Psoas muscle (tissue), 8 donors: ENCODE measurements at regions of chr7 and their contacts with region 1.

Region 1: DNA sequence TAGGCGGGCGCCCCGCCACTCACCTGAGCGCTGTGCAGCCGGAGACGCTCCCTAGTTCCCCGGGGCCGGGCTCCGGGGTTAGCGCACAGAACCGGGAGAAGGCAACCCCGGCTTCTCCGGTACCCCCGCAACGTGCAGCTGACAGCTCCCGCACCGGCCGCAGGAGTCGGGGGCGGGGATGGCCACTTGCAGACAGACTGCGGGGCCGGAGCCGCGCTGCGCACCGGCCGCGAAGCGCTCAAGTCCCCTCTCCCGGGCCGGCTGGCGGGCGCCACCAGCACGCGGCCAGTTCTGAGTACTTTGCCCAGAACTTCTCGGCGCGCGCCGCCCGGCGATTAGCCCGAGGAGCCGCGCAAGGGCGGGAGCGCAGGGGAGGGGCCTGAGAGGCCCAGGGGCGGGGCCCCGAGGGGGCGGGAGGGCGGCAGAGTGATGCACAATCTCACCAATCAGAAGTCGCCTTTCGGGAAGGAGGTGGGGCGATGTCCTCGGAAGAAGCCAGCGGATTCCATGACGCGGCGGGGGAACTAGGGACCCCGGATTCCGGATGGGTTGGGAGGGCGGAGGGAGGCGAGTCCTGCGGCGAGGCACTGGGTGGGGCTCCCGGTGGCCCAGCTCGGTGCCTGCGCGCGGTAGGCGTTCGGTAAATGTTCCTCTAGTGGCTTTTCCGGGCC is at the start of gene OSBPL3:
- DNase-seq: peak; percentile 91 to 95
- ATAC-seq: peak; percentile 97 to 99 (median 97)
- H3K4me3 ChIP-seq: peak within 1 kb of the TSS; percentile 76
- H3K27ac ChIP-seq: peak within 1 kb of the TSS; percentile 83
- H3K4me1 ChIP-seq: no peaks in the 10 kb centered on the region
- H3K27me3 ChIP-seq: no peaks in the 10 kb centered on the region
- CTCF ChIP-seq: no peak
- total RNA-seq, gene OSBPL3: 1.9 to 8.7 (median 3.8) TPM

Region 2: DNA sequence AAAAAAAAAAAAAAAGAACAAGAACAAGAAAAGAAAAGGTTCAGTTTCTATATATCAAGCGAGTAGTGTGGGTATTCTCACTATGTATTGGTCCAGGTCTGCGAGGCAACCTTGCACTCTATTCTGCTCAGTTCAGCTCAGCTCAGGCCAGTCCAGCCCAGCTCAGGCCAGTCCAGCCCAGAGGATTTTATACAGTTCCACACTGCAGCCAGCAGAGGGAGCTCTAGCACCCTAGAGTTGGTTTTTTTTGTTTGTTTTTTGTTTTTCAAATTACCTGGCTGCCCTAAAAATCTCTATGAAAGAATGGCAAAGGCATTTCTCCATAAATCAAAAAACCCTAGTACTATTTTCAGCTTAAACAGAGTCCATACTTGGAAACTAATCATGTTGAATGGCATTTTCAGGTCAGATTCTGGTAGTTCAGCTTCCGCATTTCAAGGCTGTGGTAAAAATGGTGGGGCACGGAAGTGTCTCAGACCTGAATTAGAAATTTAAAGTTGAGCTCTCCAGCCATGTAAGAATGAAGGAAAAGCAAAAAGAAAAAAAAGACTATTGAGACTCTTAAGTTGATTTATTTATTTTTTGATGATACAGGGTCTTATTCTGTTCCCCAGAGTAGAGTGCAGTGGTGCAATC is 167.6 kb before region 1 on chr7:
- intact Hi-C with region 1: loop called in 1 of 2 experiments (anchors 5 kb)
- DNase-seq: peak; percentile 40 to 64
- ATAC-seq: peak; percentile 79 to 93 (median 90)
- H3K4me3 ChIP-seq: no peak overlapping the region
- H3K27ac ChIP-seq: no peak overlapping the region
- H3K4me1 ChIP-seq: no peaks in the 10 kb centered on the region
- H3K27me3 ChIP-seq: no peaks in the 10 kb centered on the region
- CTCF ChIP-seq: peak; percentile 87

Region 3: GRCh38 chr7:24819916-24820689 is 159.9 kb before region 1 on chr7:
- intact Hi-C with region 1: loop called (anchors 2 to 5 kb)
- DNase-seq: peak; percentile 77 to 86
- ATAC-seq: peak; percentile 91 to 95 (median 94)
- H3K4me3 ChIP-seq: no peak overlapping the region
- H3K27ac ChIP-seq: no peak overlapping the region
- H3K4me1 ChIP-seq: peaks cover 8% of the 10 kb centered on the region
- H3K27me3 ChIP-seq: no peaks in the 10 kb centered on the region
- CTCF ChIP-seq: peak; percentile 85

Region 4: DNA sequence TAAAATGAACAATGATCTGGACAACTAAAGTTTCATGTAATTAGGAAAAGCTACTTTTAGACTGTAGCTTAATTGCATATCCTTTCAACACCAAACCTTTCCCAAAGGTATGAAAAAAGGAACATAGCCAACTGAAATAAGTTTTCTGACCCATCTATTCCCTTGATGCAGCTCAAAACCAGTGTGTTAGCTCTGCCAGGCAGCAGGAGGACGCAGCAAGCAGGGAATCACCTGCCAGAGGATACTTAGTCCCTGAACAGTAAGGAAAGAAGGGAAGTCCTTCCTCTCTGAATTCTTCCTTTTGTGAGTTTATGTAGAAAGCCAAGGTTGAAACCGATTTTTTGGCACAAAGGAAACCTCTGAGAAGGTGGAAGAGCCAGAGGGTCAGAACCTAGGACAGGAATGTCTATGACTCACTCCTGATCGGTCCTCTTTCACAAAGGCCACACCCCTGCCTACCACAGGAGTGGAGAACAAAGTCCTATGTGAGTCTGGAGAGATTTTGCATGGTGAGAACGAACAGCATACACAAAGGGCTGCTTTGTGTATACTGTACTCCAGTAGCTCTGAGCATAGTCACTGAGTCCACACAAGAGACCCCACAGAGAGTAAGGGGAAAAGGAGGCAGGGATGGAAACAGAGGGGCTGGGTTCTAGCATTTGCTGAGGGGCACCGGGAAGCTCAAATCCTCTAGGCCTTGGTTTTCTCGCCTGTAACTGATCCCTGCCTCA is 153.9 kb before region 1 on chr7:
- intact Hi-C with region 1: loop called (anchors 2 to 5 kb)
- DNase-seq: no peak
- ATAC-seq: peak; percentile 54 to 64 (median 56)
- H3K4me3 ChIP-seq: no peak overlapping the region
- H3K27ac ChIP-seq: no peak overlapping the region
- H3K4me1 ChIP-seq: peaks cover 23% of the 10 kb centered on the region
- H3K27me3 ChIP-seq: no peaks in the 10 kb centered on the region
- CTCF ChIP-seq: no peak

Region 5: DNA sequence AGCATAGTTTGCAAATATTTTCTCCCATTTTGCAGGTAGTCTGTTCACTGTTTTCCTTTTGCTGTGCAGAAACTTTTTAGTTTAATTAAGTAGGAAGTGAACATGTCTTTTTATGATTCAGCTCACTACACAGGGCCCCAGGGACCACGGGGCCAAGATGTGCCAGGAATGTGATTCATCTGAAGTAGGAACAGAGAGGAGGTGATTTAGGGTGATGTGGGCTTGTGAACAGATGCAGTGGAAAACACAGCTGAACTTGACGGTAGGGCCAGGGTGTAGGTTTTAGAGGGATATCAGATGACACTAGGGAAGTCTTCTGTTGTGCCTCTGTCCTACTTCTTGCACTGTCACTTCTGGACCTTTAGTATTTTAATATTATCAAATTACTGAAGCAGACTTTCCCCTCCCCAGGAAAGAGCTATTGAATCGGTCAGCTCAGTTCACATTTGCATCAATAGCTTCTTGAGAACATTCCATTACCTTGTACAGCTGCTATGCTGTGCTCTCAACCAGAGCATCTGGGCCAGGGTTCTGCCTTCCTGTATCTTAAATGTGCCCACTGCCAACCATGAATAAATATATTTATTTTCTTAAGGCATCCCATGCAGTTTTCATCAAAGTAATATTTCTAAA is 96.9 kb before region 1 on chr7:
- intact Hi-C with region 1: loop called in 1 of 2 experiments (anchors 5 kb)
- DNase-seq: peak; percentile 72 to 84
- ATAC-seq: peak; percentile 78 to 91 (median 87)
- H3K4me3 ChIP-seq: no peak overlapping the region
- H3K27ac ChIP-seq: peak overlapping the region; percentile 47
- H3K4me1 ChIP-seq: peaks cover 31% of the 10 kb centered on the region
- H3K27me3 ChIP-seq: no peaks in the 10 kb centered on the region
- CTCF ChIP-seq: no peak

Region 6: GRCh38 chr7:24907311-24907886 is 72.6 kb before region 1 on chr7:
- intact Hi-C with region 1: loop called in 1 of 2 experiments (anchors 5 kb)
- DNase-seq: no peak
- ATAC-seq: no peak
- H3K4me3 ChIP-seq: no peak overlapping the region
- H3K27ac ChIP-seq: no peak overlapping the region
- H3K4me1 ChIP-seq: peaks cover 19% of the 10 kb centered on the region
- H3K27me3 ChIP-seq: no peaks in the 10 kb centered on the region
- CTCF ChIP-seq: no peak

Region 7: DNA sequence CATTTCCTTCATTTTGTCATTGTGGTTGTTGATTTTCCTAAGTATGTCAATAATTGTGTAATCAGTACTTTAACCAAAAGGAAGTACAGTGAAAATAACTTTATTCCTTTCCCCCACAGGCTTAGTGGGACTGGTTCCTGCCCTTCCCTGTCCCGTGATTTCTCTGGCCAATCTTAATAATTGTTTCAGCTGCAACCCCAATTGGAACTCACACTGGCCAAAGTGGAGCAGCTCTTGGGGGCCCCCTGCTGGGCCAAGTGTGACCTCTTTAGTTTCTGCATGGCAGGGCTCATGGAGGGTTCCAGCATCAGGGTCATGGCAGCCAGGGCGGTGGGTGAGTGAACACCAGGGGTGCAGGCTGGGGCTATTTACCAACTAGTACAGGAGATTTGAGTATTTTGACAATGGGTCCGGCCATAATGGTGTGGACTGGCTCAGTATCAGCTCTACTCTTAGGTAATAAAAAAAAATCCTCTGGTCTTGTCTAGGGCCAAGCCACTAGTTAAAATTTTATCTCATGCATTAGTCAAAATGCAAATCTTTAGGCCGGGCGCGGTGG is 113.3 kb after region 1 on chr7:
- intact Hi-C with region 1: loop called in 1 of 2 experiments (anchors 10 kb)
- DNase-seq: peak; percentile 71 to 73
- ATAC-seq: peak; percentile 49 to 85 (median 82)
- H3K4me3 ChIP-seq: no peak overlapping the region
- H3K27ac ChIP-seq: no peak overlapping the region
- H3K4me1 ChIP-seq: no peaks in the 10 kb centered on the region
- H3K27me3 ChIP-seq: no peaks in the 10 kb centered on the region
- CTCF ChIP-seq: peak; percentile 55

Region 8: DNA sequence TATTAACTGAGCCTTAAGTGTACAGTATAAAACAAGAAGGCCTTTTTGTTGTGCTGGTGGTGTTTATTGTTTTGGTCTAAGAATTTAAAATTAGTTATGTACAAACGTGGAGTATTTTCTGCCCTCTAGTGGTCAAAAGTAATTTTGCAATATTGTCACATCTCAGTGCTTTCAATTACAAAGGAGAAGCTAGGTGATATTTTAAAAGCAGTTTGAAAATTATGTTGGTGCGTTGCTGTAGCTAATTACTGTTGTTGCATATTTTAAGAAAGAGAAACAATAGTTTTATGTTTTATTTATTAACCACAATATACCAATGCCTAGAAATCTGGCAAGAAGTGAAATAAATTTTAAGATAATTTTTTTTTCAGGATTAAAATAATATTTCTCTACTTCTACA is 236.8 kb after region 1 on chr7:
- intact Hi-C with region 1: no loop called
- DNase-seq: no peak
- ATAC-seq: no peak
- H3K4me3 ChIP-seq: no peak overlapping the region
- H3K27ac ChIP-seq: no peak overlapping the region
- H3K4me1 ChIP-seq: no peaks in the 10 kb centered on the region
- H3K27me3 ChIP-seq: peaks cover 0 to 8% (median 0%) of the 10 kb centered on the region in 3 donors
- CTCF ChIP-seq: peak; percentile 81

Region 9: GRCh38 chr7:25707768-25708620 is 728.0 kb after region 1 on chr7:
- intact Hi-C with region 1: no loop called
- DNase-seq: no peak
- ATAC-seq: no peak
- H3K4me3 ChIP-seq: no peak overlapping the region
- H3K27ac ChIP-seq: no peak overlapping the region
- H3K4me1 ChIP-seq: peaks cover 28% of the 10 kb centered on the region
- H3K27me3 ChIP-seq: no peaks in the 10 kb centered on the region
- CTCF ChIP-seq: no peak